PC-3 (cell line): ENCODE measurements at regions of chr17 and their contacts with region 1.

Region 1: GRCh38 chr17:76562734-76563148 is 22.9 kb downstream of the PRCD start:
- DNase-seq: peak; percentile 81
- ATAC-seq: peak; percentile 65
- H3K4me3 ChIP-seq: peak overlapping the region; percentile 15; the same call in 1 of the 2 replicates
- H3K27ac ChIP-seq: peak overlapping the region; percentile 82
- H3K4me1 ChIP-seq: peaks cover 60% of the 10 kb centered on the region
- H3K27me3 ChIP-seq: no peaks in the 10 kb centered on the region
- CTCF ChIP-seq: no peak

Region 2: DNA sequence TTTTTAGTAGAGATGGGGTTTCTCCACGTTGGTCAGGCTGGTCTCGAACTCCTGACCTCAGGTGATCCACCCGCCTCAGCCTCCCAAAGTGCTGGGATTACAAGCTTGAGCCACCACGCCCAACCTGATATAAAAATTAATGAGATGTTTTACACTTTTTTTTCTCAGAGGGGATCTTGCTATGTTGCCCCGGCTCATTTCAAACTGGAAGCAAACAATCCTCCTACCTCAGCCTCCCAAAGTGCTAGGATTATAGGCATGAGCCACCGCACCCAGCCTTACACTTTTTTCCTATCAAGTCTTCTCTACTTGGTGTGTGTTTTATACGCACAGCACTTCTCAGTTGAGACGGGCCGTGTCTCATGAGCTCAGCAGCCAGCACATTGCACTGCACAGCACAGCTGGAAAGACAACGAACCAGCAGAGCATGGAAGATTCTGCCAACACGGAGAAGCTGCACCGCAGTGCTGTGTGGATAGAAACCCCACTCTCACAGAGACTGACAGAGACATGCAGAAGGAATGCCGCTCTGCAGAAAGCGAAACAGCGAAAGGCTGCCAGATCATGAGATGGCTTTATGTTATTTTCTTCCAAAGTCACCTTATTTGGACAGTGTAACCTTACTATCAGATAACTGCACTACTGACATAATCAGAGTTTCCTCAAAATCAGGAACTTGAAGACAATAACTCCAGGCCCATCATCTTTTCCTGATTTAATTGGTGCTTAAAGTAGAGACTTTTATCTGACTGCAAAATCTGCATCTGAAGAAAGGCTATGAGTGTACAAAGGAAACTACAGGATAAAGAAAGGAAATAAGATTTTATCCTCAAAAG is 248.1 kb before region 1 on chr17:
- CTCF ChIA-PET with region 1: no interaction called
- POLR2A ChIA-PET with region 1: no interaction called
- intact Hi-C with region 1: no loop called
- DNase-seq: no peak
- ATAC-seq: no peak
- H3K4me3 ChIP-seq: no peak overlapping the region
- H3K27ac ChIP-seq: no peak overlapping the region
- H3K4me1 ChIP-seq: no peaks in the 10 kb centered on the region
- H3K27me3 ChIP-seq: no peaks in the 10 kb centered on the region
- CTCF ChIP-seq: no peak

Region 3: GRCh38 chr17:76408052-76408849 is 154.5 kb before region 1 on chr17:
- CTCF ChIA-PET with region 1: no interaction called
- POLR2A ChIA-PET with region 1: no interaction called
- intact Hi-C with region 1: no loop called
- DNase-seq: peak; percentile 91
- ATAC-seq: peak; percentile 72
- H3K4me3 ChIP-seq: no peak overlapping the region
- H3K27ac ChIP-seq: no peak overlapping the region
- H3K4me1 ChIP-seq: no peaks in the 10 kb centered on the region
- H3K27me3 ChIP-seq: no peaks in the 10 kb centered on the region
- CTCF ChIP-seq: peak; percentile 99

Region 4: DNA sequence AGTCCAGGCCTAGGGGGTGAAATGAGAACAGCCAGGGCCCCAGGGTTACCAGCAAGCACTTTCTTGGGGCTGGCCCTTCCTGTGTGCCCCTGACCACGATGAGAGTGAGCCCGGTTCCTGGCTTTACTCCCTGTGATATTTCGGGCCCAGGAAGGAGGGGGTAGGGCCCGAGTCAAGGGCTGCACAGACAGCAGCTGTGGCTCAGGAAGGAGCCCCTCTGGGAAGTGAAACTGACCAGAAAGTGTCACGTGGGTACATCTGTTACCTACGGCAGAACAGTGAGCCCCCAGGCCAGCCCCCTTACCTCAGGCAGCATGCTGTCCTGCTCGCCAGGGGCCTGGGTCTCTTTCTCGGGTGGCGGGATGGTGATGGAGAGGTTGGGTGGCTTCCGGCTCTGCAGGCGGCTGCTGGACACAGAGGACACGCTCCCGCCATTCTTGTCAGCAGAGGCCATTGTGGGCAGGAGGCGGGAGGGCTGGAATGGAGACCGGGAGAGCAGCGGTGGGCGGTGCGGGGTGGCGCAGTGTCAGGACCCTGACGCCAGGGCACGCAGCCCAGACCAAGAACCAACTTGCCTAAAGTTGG is 81.6 kb before region 1 on chr17:
- CTCF ChIA-PET with region 1: no interaction called
- POLR2A ChIA-PET with region 1: no interaction called
- intact Hi-C with region 1: no loop called
- DNase-seq: no peak
- ATAC-seq: no peak
- H3K4me3 ChIP-seq: no peak overlapping the region
- H3K27ac ChIP-seq: no peak overlapping the region
- H3K4me1 ChIP-seq: peaks cover 5% of the 10 kb centered on the region
- H3K27me3 ChIP-seq: no peaks in the 10 kb centered on the region
- CTCF ChIP-seq: no peak

Region 5: GRCh38 chr17:76547184-76547641 is 15.5 kb before region 1 on chr17:
- CTCF ChIA-PET with region 1: interaction called, 10 read pairs
- POLR2A ChIA-PET with region 1: interaction called, 11 read pairs
- intact Hi-C with region 1: loop called (anchors 1 kb)
- DNase-seq: peak; percentile 80
- ATAC-seq: peak; percentile 61
- H3K4me3 ChIP-seq: peak overlapping the region; percentile 22; the same call in 1 of the 2 replicates
- H3K27ac ChIP-seq: peak overlapping the region; percentile 97
- H3K4me1 ChIP-seq: peaks cover 35% of the 10 kb centered on the region
- H3K27me3 ChIP-seq: no peaks in the 10 kb centered on the region
- CTCF ChIP-seq: peak; percentile 90

Region 6: DNA sequence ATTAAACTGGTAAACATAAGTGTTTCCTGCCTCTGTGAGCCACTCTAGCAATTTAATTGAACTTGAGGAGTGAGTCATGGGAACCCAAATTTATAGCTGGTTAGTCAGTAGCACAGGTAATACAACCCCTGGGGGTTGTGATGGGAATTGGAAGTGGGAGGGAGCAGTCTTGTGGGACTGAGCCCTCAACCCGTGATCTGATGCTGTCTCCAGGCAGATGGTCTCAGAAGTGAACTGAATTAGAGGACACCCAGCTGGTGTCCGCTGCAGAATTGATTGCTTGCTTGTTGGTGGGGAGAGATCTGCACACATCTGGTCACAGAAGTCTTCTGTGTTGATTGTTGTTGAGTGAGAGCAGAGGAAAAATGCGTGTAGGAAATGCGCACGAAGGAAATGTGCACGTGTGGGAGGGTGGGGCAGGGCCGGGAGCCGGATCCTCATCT is 30.7 kb after region 1 on chr17:
- CTCF ChIA-PET with region 1: interaction called, 13 read pairs
- POLR2A ChIA-PET with region 1: interaction called, 12 read pairs
- intact Hi-C with region 1: no loop called
- DNase-seq: peak; percentile 99
- ATAC-seq: peak; percentile 97
- H3K4me3 ChIP-seq: no peak overlapping the region
- H3K27ac ChIP-seq: peak overlapping the region; percentile 84
- H3K4me1 ChIP-seq: peaks cover 34% of the 10 kb centered on the region
- H3K27me3 ChIP-seq: no peaks in the 10 kb centered on the region
- CTCF ChIP-seq: peak; percentile 57